PC-9 (cell line): ENCODE measurements at regions of chr6 and their contacts with region 1.

Region 1: DNA sequence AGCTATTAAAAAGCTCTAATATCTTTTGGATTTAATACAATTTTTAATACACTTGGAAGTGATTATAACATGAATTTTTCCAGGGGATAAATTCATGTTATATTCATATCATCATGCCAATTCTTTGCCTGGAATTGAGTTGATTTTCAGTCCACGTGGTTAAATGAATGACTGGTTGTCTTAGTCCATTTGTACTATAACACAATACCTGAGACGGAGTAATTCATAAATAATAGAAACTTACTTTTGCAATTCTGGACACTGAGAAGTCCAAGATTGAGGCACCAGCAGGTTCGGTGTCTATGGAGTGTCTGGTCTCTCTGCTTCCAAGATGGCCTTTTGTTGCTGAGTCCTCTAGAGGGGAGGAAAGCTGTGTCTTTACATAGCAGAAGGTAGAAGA is 66.2 kb upstream of the TRDN start:
- DNase-seq: no peak
- H3K4me3 ChIP-seq: no peak overlapping the region
- H3K27ac ChIP-seq: no peak overlapping the region
- H3K4me1 ChIP-seq: no peaks in the 10 kb centered on the region
- H3K27me3 ChIP-seq: no peaks in the 10 kb centered on the region
- CTCF ChIP-seq: no peak

Region 2: DNA sequence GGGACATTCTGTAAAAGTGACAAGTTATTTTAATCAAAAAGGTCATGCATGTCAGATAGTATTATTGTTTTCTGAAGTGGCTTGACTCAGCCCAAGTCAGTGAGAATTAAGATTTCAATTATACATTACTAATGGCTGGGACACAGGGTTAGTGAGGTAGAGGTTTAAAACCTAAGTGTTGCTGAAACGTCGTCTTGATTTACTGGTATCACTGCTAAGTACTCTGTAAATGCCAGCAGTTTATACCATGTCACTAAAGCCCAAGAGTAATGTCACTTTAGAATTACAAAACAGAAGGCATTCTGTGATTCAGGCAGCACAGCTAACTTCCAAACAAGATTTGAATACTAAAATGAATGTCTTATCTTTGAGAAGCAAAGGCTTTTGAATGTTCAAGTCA is 277.4 kb after region 1 on chr6:
- CTCF ChIA-PET with region 1: interaction called, 10 read pairs
- POLR2A ChIA-PET with region 1: no interaction called
- intact Hi-C with region 1: no loop called
- DNase-seq: no peak
- H3K4me3 ChIP-seq: no peak overlapping the region
- H3K27ac ChIP-seq: no peak overlapping the region
- H3K4me1 ChIP-seq: no peaks in the 10 kb centered on the region
- H3K27me3 ChIP-seq: no peaks in the 10 kb centered on the region
- CTCF ChIP-seq: no peak